ENCODE measurements at regions of chr14 and their contacts with region 1.

Region 1: GRCh38 chr14:68520637-68521556 is 272.0 kb downstream of the ZFP36L1 start:
- DNase-seq: peak; percentile 84 to 92
- H3K4me3 ChIP-seq: no peak overlapping the region
- H3K4me3 Mint-ChIP-seq: peak overlapping the region; percentile 17
- H3K27ac Mint-ChIP-seq: peak overlapping the region; percentile 96
- H3K4me1 ChIP-seq: peaks cover 52% of the 10 kb centered on the region
- H3K4me1 Mint-ChIP-seq: peaks cover 41% of the 10 kb centered on the region
- H3K27me3 ChIP-seq: no peaks in the 10 kb centered on the region
- H3K27me3 Mint-ChIP-seq: no peaks in the 10 kb centered on the region
- CTCF ChIP-seq: no peak

Region 2: GRCh38 chr14:68487805-68488590 is 32.9 kb before region 1 on chr14:
- CTCF ChIA-PET with region 1: no interaction called
- POLR2A ChIA-PET with region 1: no interaction called
- intact Hi-C with region 1: loop called (anchors 1 kb)
- DNase-seq: no peak
- H3K4me3 ChIP-seq: no peak overlapping the region
- H3K4me3 Mint-ChIP-seq: no peak overlapping the region
- H3K27ac Mint-ChIP-seq: peak overlapping the region; percentile 94
- H3K4me1 ChIP-seq: peaks cover 50% of the 10 kb centered on the region
- H3K4me1 Mint-ChIP-seq: peaks cover 55% of the 10 kb centered on the region
- H3K27me3 ChIP-seq: no peaks in the 10 kb centered on the region
- H3K27me3 Mint-ChIP-seq: no peaks in the 10 kb centered on the region
- CTCF ChIP-seq: no peak

Region 3: GRCh38 chr14:68577827-68578541 is 57.1 kb after region 1 on chr14:
- CTCF ChIA-PET with region 1: no interaction called
- POLR2A ChIA-PET with region 1: no interaction called
- intact Hi-C with region 1: loop called (anchors 2 kb)
- DNase-seq: peak; percentile 84 to 90
- H3K4me3 ChIP-seq: no peak overlapping the region
- H3K4me3 Mint-ChIP-seq: peak overlapping the region; percentile 39
- H3K27ac Mint-ChIP-seq: peak overlapping the region; percentile 97
- H3K4me1 ChIP-seq: peaks cover 27% of the 10 kb centered on the region
- H3K4me1 Mint-ChIP-seq: peaks cover 30% of the 10 kb centered on the region
- H3K27me3 ChIP-seq: no peaks in the 10 kb centered on the region
- H3K27me3 Mint-ChIP-seq: no peaks in the 10 kb centered on the region
- CTCF ChIP-seq: no peak

Region 4: DNA sequence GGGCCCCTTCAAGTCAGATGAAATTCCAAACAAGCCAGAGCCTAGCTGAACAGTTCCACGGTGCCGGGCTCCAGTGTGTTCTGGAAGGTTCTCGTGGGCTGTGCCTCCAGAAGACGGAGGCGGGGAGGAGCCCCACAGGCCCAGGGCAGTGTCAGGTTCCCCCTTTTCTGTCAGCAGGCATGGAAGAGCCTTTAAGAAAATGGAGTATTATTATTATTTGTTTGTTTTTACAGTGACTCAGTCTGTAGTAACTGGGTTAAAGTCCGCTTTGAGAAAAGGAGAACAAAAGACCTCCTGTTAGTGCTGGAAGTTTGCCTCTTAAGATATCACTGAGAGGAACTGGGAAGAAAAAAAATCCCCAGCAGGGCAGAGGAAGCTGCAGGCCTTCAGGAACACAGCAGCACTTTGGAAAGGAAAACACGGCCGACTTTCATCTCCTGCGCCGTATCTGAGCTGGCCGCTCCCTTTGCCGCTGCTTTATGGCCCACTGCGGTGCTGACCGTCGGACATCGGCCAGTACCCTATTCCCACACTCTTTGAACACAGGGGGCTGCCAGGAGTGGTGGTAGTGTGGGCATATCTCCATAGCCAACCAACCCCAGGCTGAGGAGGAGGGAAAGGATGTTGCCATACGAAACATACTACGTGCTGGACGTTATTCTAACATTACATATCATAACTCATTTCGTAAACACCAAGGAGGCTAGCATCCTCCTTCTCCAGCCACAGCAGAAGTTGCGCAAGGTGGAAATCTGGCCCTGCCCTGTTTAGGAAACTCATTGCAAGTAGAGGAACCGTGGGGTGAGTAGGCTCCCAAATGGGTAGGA is 77.9 kb after region 1 on chr14:
- CTCF ChIA-PET with region 1: no interaction called
- POLR2A ChIA-PET with region 1: interaction called, 3 read pairs
- intact Hi-C with region 1: loop called (anchors 1 kb)
- DNase-seq: peak; percentile 77 to 84
- H3K4me3 ChIP-seq: no peak overlapping the region
- H3K4me3 Mint-ChIP-seq: peak overlapping the region; percentile 59
- H3K27ac Mint-ChIP-seq: peak overlapping the region; percentile 94
- H3K4me1 ChIP-seq: peaks cover 49% of the 10 kb centered on the region
- H3K4me1 Mint-ChIP-seq: peaks cover 33% of the 10 kb centered on the region
- H3K27me3 ChIP-seq: no peaks in the 10 kb centered on the region
- H3K27me3 Mint-ChIP-seq: no peaks in the 10 kb centered on the region
- CTCF ChIP-seq: no peak

Measured in Caco-2 (cell line).